Sigmoid colon (tissue), 7 donors: ENCODE measurements at regions of chr12 and their contacts with region 1.

Region 1: DNA sequence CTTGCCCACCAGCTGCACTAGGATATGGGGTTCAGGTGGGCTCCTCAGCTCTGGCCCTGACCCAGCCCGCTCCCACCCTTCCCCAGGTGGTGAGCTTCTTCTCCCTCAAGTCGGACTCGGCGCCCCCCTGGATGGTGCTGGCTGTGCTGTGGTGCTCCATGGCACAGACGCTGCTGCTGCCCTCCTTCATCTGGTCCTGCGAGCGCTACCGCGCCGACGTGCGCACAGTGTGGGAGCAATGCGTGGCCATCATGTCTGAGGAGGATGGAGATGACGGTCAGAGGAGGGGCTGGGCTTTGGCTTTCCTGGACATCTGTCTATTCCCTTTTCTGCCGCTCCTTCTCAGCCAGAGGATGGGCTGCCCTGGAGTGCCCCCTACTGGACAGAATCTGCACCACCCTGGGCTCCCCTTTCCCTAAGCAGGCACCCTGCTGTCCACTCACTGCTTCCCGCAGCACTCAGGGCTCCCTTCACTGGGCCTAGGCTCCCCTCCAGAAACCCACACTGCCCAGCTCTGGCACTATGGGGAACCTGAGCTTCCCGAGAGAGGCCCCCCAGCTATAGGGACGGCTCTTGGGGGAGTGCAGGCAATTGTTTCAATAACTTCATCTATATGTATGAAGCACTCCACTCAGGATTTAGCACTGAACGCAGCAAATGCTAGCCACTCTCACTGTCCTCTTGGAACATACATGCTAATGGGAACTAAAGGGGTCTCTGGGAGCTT is 2.6 kb upstream of the P3H3 start:
- DNase-seq: peak; percentile 94
- H3K4me3 ChIP-seq: peak overlapping the region in 1 of 4 donors; percentile 18
- H3K27ac ChIP-seq: no peak overlapping the region
- H3K4me1 ChIP-seq: peaks cover 3 to 66% (median 49%) of the 10 kb centered on the region in 4 donors
- H3K27me3 ChIP-seq: no peaks in the 10 kb centered on the region
- CTCF ChIP-seq: peak; percentile 84 to 95 (median 92)
- EP300 ChIP-seq: no peak
- POLR2A ChIP-seq: no peak

Region 2: DNA sequence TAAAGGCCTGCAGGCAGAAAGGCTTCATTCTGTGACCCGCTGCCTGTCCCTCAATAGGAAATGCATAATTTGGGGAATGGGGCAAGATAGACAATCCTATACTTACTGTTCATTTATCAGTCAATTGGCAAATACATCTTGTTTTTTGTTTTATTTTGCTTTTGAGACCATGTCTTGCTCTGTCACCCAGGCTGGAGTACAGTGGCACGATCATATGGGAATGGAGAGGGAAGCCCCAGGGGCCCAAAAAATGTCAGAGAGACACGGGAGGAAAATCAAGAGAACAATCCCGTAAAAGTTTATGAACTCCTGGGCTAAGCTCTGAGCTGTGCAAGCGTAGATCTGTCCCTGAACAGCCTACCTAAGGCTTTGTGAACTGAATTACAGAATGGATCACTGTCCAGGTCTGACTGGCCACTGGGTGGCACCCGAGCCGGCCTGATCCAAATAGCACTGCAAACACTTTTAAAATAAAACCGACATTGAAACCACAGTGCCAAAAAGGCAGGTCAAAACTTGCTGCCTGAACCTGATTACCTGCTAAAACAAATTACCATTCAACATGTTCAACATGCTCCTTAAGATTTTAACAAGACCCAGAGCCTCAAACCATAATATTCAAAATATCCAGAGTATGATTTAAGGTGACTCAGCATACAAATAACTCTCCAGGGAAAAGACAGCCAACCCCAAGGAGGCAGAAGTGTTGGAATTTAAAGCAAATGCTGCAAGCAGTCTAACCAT is 89.9 kb before region 1 on chr12:
- intact Hi-C with region 1: loop called (anchors 2 kb)
- DNase-seq: peak; percentile 81
- H3K4me3 ChIP-seq: no peak overlapping the region
- H3K27ac ChIP-seq: peak overlapping the region; percentile 42 to 67 (median 60)
- H3K4me1 ChIP-seq: peaks cover 0 to 10% (median 5%) of the 10 kb centered on the region in 4 donors
- H3K27me3 ChIP-seq: no peaks in the 10 kb centered on the region
- CTCF ChIP-seq: peak; percentile 53 to 73 (median 71)
- EP300 ChIP-seq: no peak
- POLR2A ChIP-seq: no peak

Region 3: GRCh38 chr12:6752921-6753771 is 72.4 kb before region 1 on chr12 and contains the start of gene MLF2:
- intact Hi-C with region 1: loop called (anchors 1 kb)
- DNase-seq: peak; percentile 100
- H3K4me3 ChIP-seq: peak within 1 kb of the TSS; percentile 90 to 96 (median 91)
- H3K27ac ChIP-seq: peak within 1 kb of the TSS; percentile 98 to 99 (median 99)
- H3K4me1 ChIP-seq: peaks cover 0 to 24% (median 19%) of the 10 kb centered on the region in 4 donors
- H3K27me3 ChIP-seq: no peaks in the 10 kb centered on the region
- CTCF ChIP-seq: peak in 1 of 4 experiments; percentile 95
- EP300 ChIP-seq: peak in 1 of 4 donors; percentile 72
- POLR2A ChIP-seq: peak; percentile 96
- total RNA-seq, gene MLF2: 148 to 163 (median 159) TPM

Region 4: DNA sequence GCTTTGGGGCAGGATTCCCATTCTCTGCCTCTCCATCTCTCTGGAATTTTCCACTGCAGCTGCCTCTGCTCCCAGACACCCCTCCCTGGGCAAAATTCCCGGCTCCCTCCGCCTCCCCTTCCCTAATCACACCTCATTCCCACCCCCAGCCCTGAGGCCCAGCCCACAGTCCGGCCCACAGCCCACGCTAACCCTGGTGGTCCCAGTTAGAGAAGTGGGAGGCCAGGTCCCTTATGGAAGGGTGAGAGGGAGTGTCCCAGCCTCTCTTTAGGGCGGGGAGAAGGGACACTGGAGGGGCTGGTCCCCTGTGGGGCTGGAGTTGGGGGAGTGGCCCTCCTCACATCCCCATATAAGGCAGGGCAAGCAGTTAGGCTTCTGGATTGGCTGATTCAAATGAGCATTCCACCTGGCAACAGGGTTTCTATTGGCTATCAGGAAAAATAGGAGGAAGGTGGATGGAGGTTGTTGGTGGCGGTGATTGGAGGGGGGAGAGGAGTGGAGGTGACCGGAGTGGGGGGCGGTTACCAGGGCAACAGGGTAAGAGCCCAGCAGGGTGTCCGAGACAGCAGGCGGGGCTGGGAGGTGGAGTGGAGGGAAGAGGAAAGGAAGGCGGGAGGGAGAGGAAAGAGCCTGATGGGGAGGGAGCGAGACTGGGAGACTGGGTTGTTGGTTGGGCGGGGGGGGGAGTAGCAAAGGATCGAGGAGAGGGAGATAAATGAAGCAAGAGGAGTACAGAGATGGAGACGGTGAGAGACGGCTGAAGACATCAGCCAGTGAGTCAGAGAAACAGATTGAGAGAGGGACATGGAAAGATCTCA is 61.3 kb before region 1 on chr12:
- intact Hi-C with region 1: loop called (anchors 5 kb)
- DNase-seq: peak; percentile 99
- H3K4me3 ChIP-seq: peak overlapping the region in 3 of 4 donors; percentile 14 to 32 (median 24)
- H3K27ac ChIP-seq: peak overlapping the region; percentile 93 to 99 (median 96)
- H3K4me1 ChIP-seq: peaks cover 0 to 48% (median 44%) of the 10 kb centered on the region in 4 donors
- H3K27me3 ChIP-seq: no peaks in the 10 kb centered on the region
- CTCF ChIP-seq: no peak
- EP300 ChIP-seq: no peak
- POLR2A ChIP-seq: peak; percentile 30 to 32